GM12878 (cell line): ENCODE measurements at regions of chr6 and their contacts with region 1.

Region 1: DNA sequence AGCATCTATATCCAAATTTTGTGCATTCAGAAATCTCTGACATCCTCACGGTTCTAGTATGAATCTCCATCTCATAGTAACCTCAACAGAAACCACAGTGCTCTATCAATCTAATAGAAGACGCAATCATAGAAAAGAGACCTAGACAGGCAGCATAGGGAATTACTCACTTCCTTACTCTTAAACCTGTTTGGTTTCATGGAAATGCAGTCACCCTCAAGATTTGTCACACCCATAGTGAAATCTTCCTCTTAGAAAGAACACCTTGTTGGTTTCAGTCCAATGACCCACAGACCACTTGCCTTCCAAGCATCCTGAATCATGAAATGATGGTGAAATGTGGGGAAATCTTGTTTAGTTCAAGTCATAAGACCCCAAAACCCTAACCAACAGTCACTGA is 166.1 kb upstream of the PRDM1 start:
- DNase-seq: no peak
- ATAC-seq: no peak
- H3K4me3 ChIP-seq: no peak overlapping the region
- H3K27ac ChIP-seq: no peak overlapping the region
- H3K4me1 ChIP-seq: no peaks in the 10 kb centered on the region
- H3K27me3 ChIP-seq: peaks cover 0 to 1% of the 10 kb centered on the region in 2 experiments; a peak in 1 of 4 replicates
- CTCF ChIP-seq: no peak
- EP300 ChIP-seq: no peak
- POLR2A ChIP-seq: no peak
- RAD21 ChIP-seq: no peak

Region 2: DNA sequence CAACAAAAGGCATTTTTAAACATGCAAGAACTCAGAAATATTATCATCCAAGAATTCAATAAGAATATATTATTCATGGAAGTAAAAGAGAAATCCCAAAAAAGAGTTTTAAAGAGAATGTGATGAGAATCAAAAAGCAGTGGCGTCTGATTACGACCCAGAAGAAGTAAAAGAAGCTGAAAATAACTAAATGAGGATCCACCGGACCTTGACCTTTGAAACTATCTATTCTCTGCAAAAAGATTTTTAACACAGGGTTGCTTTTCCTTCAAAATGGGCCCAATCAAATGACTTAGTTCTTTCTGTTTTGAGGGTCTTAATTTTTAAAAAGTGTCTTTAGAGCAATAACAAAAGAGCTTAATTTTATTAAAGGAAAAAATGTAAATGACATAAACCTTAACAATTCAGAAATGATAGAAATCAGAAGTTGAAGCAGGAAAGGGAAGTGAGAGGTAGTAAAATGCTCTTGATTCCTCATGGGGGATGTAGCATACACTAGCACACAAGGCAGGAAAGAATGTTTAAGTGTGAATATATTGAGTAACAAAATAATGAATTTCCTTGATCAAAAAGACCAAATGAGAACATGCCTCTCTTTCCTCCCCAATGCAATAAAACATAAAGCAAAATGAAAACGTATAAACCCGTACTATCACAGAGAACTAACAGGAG is 57.0 kb before region 1 on chr6:
- CTCF ChIA-PET with region 1: no interaction called
- POLR2A ChIA-PET with region 1: no interaction called
- RAD21 ChIA-PET with region 1: no interaction called
- SMC1A ChIA-PET with region 1: no interaction called
- in situ Hi-C with region 1: no loop called
- intact Hi-C with region 1: loop called (anchors 5 kb)
- DNase-seq: no peak
- ATAC-seq: peak; percentile 49; the same call in 2 of the 3 replicates
- H3K4me3 ChIP-seq: no peak overlapping the region
- H3K27ac ChIP-seq: no peak overlapping the region
- H3K4me1 ChIP-seq: no peaks in the 10 kb centered on the region
- H3K27me3 ChIP-seq: peaks cover 2 to 6% of the 10 kb centered on the region in 2 experiments; a peak in 2 of 4 replicates
- CTCF ChIP-seq: no peak
- EP300 ChIP-seq: no peak
- POLR2A ChIP-seq: no peak
- RAD21 ChIP-seq: no peak

Region 3: GRCh38 chr6:106181664-106182418 is 261.8 kb after region 1 on chr6:
- CTCF ChIA-PET with region 1: no interaction called
- POLR2A ChIA-PET with region 1: no interaction called
- RAD21 ChIA-PET with region 1: no interaction called
- SMC1A ChIA-PET with region 1: no interaction called
- in situ Hi-C with region 1: no loop called
- intact Hi-C with region 1: no loop called
- DNase-seq: peak; percentile 40
- ATAC-seq: peak; percentile 57
- H3K4me3 ChIP-seq: no peak overlapping the region
- H3K27ac ChIP-seq: peak overlapping the region; percentile 74
- H3K4me1 ChIP-seq: peaks cover 45% of the 10 kb centered on the region
- H3K27me3 ChIP-seq: no peaks in the 10 kb centered on the region
- CTCF ChIP-seq: no peak
- EP300 ChIP-seq: no peak
- POLR2A ChIP-seq: no peak
- RAD21 ChIP-seq: no peak